WTC11 (cell line): ENCODE measurements at regions of chr11 and their contacts with region 1.

Region 1: GRCh38 chr11:65274735-65275682 is 13.2 kb downstream of the POLA2 start:
- DNase-seq: peak; percentile 65
- ATAC-seq: peak; percentile 97
- H3K4me3 Mint-ChIP-seq: no peak overlapping the region
- H3K27ac Mint-ChIP-seq: no peak overlapping the region
- H3K4me1 Mint-ChIP-seq: peaks cover 9% of the 10 kb centered on the region
- H3K27me3 Mint-ChIP-seq: no peaks in the 10 kb centered on the region
- CTCF ChIP-seq: peak; percentile 43; the same call in 1 of the 2 replicates

Region 2: GRCh38 chr11:65213322-65214211 is 61.4 kb before region 1 on chr11:
- CTCF ChIA-PET with region 1: interaction called, 10 read pairs
- POLR2A ChIA-PET with region 1: no interaction called
- DNase-seq: peak; percentile 84
- ATAC-seq: peak; percentile 85
- H3K4me3 Mint-ChIP-seq: peak overlapping the region; percentile 58
- H3K27ac Mint-ChIP-seq: peak overlapping the region; percentile 100
- H3K4me1 Mint-ChIP-seq: peaks cover 42% of the 10 kb centered on the region
- H3K27me3 Mint-ChIP-seq: no peaks in the 10 kb centered on the region
- CTCF ChIP-seq: no peak

Region 3: GRCh38 chr11:65251476-65251875 is 23.5 kb before region 1 on chr11:
- CTCF ChIA-PET with region 1: interaction called, 17 read pairs
- POLR2A ChIA-PET with region 1: no interaction called
- DNase-seq: no peak
- ATAC-seq: no peak
- H3K4me3 Mint-ChIP-seq: no peak overlapping the region
- H3K27ac Mint-ChIP-seq: no peak overlapping the region
- H3K4me1 Mint-ChIP-seq: no peaks in the 10 kb centered on the region
- H3K27me3 Mint-ChIP-seq: no peaks in the 10 kb centered on the region
- CTCF ChIP-seq: no peak

Region 4: DNA sequence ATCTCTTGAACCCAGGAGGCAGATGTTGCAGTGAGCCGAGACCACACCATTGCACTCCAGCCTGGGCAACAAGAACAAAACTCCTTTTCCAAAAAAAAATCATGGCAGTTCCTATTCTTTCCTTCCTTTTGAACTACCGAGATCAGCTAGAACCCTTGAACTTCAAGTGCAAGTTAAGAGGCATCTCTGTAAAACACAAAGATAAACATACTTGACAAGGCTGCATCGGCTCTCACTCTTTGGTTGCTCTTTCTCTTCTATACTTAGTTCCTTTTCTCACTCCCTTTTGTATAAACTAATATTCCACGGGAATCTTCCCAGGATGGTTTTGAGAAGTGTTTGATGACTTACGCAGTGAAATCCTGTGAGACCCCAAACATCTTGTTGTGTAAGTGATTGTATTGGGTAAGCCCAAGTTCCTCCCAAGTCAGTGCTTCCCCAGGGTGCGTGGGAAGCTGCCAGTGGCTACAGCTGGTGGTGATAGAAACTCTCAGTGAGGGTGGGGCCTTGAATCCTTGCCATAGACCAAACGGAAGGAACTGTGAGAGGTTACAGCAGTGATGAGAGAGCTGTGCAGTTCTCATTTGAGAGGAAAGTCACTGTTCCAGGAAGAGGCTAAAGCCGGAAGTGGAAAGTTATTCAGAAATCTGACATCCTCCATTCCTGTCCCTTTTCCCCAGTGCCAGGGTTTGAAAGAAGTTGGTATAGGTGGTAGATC is 15.6 kb after region 1 on chr11:
- CTCF ChIA-PET with region 1: interaction called, 14 read pairs
- POLR2A ChIA-PET with region 1: no interaction called
- DNase-seq: no peak
- ATAC-seq: no peak
- H3K4me3 Mint-ChIP-seq: no peak overlapping the region
- H3K27ac Mint-ChIP-seq: no peak overlapping the region
- H3K4me1 Mint-ChIP-seq: peaks cover 5% of the 10 kb centered on the region
- H3K27me3 Mint-ChIP-seq: no peaks in the 10 kb centered on the region
- CTCF ChIP-seq: no peak

Region 5: DNA sequence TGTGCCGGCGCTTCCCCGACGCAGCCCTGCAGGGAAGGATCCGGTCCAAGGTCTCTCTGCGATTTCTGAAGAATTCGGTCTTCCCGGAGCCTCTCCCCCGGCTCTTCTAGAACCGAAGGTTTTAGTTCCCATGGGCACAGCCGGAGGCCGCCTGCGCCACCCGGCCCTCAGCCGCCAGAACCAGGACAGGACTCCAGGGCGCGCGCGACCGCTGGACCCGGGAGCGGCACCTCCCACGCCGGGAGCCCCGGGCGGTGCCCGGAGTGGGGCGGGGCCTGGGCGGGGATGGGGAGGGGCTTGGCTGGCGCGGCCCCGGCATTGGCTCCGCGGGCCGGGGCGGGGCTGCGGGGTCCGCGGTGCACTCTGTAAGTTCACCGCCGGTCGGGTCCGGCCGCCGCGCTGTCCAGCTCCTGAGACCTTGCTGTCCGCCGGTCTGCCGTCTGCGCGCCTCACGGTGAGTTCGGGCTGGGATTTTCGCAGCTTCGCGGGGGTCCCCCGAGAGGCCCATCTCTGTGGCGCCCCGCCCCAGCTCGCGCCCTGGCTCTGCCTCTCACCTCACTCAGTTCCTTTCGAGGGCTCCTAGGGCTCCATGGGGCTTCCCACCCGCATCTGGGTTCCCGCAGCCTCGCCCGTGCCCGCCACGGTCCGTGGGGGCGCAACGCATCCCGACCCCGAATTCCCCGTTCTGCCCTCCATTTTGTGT is 39.6 kb after region 1 on chr11 and contains the start of gene CDC42EP2:
- CTCF ChIA-PET with region 1: interaction called, 156 read pairs
- POLR2A ChIA-PET with region 1: interaction called, 7 read pairs
- DNase-seq: peak; percentile 87
- ATAC-seq: peak; percentile 78
- H3K4me3 Mint-ChIP-seq: peak within 1 kb of the TSS; percentile 71
- H3K27ac Mint-ChIP-seq: no peak within 1 kb of the TSS
- H3K4me1 Mint-ChIP-seq: peaks cover 39% of the 10 kb centered on the region
- H3K27me3 Mint-ChIP-seq: peaks cover 35% of the 10 kb centered on the region
- CTCF ChIP-seq: no peak
- total RNA-seq, gene CDC42EP2: 11.0 to 15.2 TPM (median 11.5 TPM) in 3 replicates

Region 6: GRCh38 chr11:65338676-65339075 is 63.7 kb after region 1 on chr11:
- CTCF ChIA-PET with region 1: interaction called, 17 read pairs
- POLR2A ChIA-PET with region 1: no interaction called
- DNase-seq: no peak
- ATAC-seq: no peak
- H3K4me3 Mint-ChIP-seq: no peak overlapping the region
- H3K27ac Mint-ChIP-seq: peak overlapping the region; percentile 28
- H3K4me1 Mint-ChIP-seq: peaks cover 13% of the 10 kb centered on the region
- H3K27me3 Mint-ChIP-seq: no peaks in the 10 kb centered on the region
- CTCF ChIP-seq: no peak